SK-N-SH (cell line): ENCODE measurements at regions of chr9 and their contacts with region 1.

Region 1: DNA sequence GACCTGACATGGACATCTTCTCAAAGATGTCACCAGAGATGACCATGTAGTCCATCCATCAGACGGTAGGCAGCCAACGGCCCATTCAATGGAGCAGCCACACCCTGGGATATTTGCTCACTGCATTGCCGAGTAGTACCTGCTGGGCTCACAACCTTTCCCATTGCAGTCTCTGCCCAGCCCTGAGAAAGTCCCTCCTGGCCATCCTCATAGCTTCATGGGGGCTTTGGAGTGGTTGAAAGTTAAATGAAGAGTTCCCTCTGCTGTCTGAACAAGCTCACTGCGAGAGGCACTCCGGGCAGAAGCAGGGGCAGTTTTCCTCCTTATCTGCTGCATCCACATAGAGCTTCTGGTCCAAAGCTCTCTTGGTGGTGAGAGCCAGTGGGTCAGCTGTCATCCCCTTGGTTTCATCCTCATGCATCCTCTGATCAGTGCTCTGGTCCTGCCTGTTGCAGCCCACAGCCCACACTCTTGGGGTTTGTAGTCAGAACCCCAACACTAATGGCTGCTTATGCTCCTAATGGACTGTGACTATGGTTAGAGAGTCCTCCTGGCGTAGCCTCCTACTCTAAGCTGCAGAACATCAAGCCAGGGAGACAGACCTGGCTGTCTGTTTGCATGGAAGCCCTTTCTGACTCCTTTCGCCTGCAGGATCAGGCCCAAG is 23.4 kb downstream of the TNFSF8 start:
- DNase-seq: peak; percentile 45
- H3K4me3 ChIP-seq: no peak overlapping the region; a peak in 1 of 4 replicates
- H3K27ac ChIP-seq: no peak overlapping the region
- H3K4me1 ChIP-seq: peaks cover 7 to 38% of the 10 kb centered on the region in 2 experiments
- H3K27me3 ChIP-seq: no peaks in the 10 kb centered on the region
- CTCF ChIP-seq: peak; percentile 81
- EP300 ChIP-seq: no peak
- RAD21 ChIP-seq: peak; percentile 80

Region 2: GRCh38 chr9:114738581-114739316 is 168.3 kb before region 1 on chr9:
- CTCF ChIA-PET with region 1: interaction called, 41 read pairs
- POLR2A ChIA-PET with region 1: no interaction called
- DNase-seq: peak; percentile 69
- H3K4me3 ChIP-seq: no peak overlapping the region
- H3K27ac ChIP-seq: no peak overlapping the region
- H3K4me1 ChIP-seq: peaks cover 0 to 22% of the 10 kb centered on the region in 2 experiments; a peak in 2 of 4 replicates
- H3K27me3 ChIP-seq: no peaks in the 10 kb centered on the region
- CTCF ChIP-seq: peak; percentile 88
- EP300 ChIP-seq: no peak
- RAD21 ChIP-seq: peak; percentile 94

Region 3: GRCh38 chr9:114761515-114761914 is 145.5 kb before region 1 on chr9:
- CTCF ChIA-PET with region 1: no interaction called
- POLR2A ChIA-PET with region 1: no interaction called
- DNase-seq: no peak
- H3K4me3 ChIP-seq: no peak overlapping the region
- H3K27ac ChIP-seq: no peak overlapping the region
- H3K4me1 ChIP-seq: no peaks in the 10 kb centered on the region
- H3K27me3 ChIP-seq: no peaks in the 10 kb centered on the region
- CTCF ChIP-seq: no peak
- EP300 ChIP-seq: no peak
- RAD21 ChIP-seq: no peak

Region 4: GRCh38 chr9:114889802-114890251 is 17.2 kb before region 1 on chr9:
- CTCF ChIA-PET with region 1: interaction called, 15 read pairs
- POLR2A ChIA-PET with region 1: no interaction called
- DNase-seq: no peak
- H3K4me3 ChIP-seq: no peak overlapping the region
- H3K27ac ChIP-seq: no peak overlapping the region
- H3K4me1 ChIP-seq: peaks cover 0 to 15% of the 10 kb centered on the region in 2 experiments; a peak in 2 of 4 replicates
- H3K27me3 ChIP-seq: no peaks in the 10 kb centered on the region
- CTCF ChIP-seq: no peak
- EP300 ChIP-seq: no peak
- RAD21 ChIP-seq: no peak

Region 5: DNA sequence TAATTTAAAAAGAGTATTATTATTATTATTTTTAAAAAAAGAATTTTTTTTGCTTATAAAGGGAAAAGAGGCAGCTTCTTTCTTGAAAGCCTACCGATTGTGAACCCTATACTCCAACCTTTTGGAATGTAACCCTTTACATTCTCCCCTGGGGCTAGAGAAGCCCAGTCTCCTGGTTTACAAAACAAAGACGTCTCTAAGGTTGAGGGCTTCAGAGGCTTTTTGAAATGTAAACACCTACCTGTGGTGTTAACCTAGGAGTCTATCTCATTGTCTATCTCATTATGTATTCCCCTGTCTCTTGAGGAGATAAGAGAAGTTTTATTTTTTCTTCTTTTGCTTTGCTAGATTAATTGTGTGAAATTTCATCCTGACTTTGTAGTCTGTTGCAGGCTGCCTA is 18.6 kb after region 1 on chr9:
- CTCF ChIA-PET with region 1: interaction called, 31 read pairs
- POLR2A ChIA-PET with region 1: no interaction called
- DNase-seq: no peak
- H3K4me3 ChIP-seq: no peak overlapping the region
- H3K27ac ChIP-seq: no peak overlapping the region
- H3K4me1 ChIP-seq: no peaks in the 10 kb centered on the region
- H3K27me3 ChIP-seq: peaks cover 21% of the 10 kb centered on the region
- CTCF ChIP-seq: no peak
- EP300 ChIP-seq: no peak
- RAD21 ChIP-seq: no peak

Region 6: GRCh38 chr9:114981070-114981469 is 74.0 kb after region 1 on chr9:
- CTCF ChIA-PET with region 1: interaction called, 11 read pairs
- POLR2A ChIA-PET with region 1: no interaction called
- DNase-seq: no peak
- H3K4me3 ChIP-seq: no peak overlapping the region
- H3K27ac ChIP-seq: no peak overlapping the region
- H3K4me1 ChIP-seq: no peaks in the 10 kb centered on the region
- H3K27me3 ChIP-seq: peaks cover 17% of the 10 kb centered on the region; the same call in 1 of the 2 replicates
- CTCF ChIP-seq: no peak
- EP300 ChIP-seq: no peak
- RAD21 ChIP-seq: no peak

Region 7: GRCh38 chr9:115171921-115172388 is 264.9 kb after region 1 on chr9:
- CTCF ChIA-PET with region 1: no interaction called
- POLR2A ChIA-PET with region 1: no interaction called
- DNase-seq: no peak
- H3K4me3 ChIP-seq: no peak overlapping the region
- H3K27ac ChIP-seq: no peak overlapping the region
- H3K4me1 ChIP-seq: peaks cover 2 to 17% of the 10 kb centered on the region in 2 experiments; a peak in 3 of 4 replicates
- H3K27me3 ChIP-seq: no peaks in the 10 kb centered on the region
- CTCF ChIP-seq: no peak
- EP300 ChIP-seq: no peak
- RAD21 ChIP-seq: no peak

Region 8: DNA sequence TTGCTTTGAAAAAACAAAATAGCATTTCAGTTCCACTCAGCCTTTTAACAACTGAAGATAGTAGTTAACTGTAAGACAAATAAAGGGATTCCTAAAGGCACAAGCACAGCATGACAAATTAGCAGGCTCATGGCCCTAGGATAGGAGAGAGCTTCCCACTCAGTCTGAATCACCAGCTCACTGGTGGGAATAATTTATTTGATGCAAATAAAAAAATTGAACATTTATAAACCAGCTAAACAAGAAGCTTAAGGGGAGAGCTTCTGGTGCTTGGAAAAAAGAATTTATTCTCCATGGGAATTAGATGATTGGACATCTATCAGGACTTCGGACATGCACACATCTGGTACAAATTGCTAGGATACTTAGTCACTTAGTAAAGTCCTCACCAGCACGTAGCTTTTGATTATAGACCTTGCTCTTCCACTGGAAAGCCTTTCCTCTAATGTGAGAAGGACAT is 505.0 kb after region 1 on chr9:
- CTCF ChIA-PET with region 1: no interaction called
- POLR2A ChIA-PET with region 1: no interaction called
- DNase-seq: no peak
- H3K4me3 ChIP-seq: no peak overlapping the region
- H3K27ac ChIP-seq: peak overlapping the region in 1 of 2 experiments; percentile 24; a peak in 1 of 4 replicates
- H3K4me1 ChIP-seq: peaks cover 0 to 23% of the 10 kb centered on the region in 2 experiments; a peak in 2 of 4 replicates
- H3K27me3 ChIP-seq: no peaks in the 10 kb centered on the region
- CTCF ChIP-seq: no peak
- EP300 ChIP-seq: no peak
- RAD21 ChIP-seq: no peak